Activated T-helper 1 cell treated with anti-CD3 and anti-CD28 coated beads, Interleukin-12 subunit alpha, Interleukin-12 subunit beta, Interleukin-2, Interleukin-4 antibody, amounts not matched to agents 30 ng/mL and 10 ng/mL and 1 ng/mL, durations not matched to agents 14 hours and 24 hours and 36 hours (primary cell): ENCODE measurements at regions of chr2 and their contacts with region 1.

Region 1: GRCh38 chr2:241315093-241315878 is at the start of gene HDLBP:
- DNase-seq: peak; percentile 100
- H3K4me3 Mint-ChIP-seq: peak within 1 kb of the TSS; percentile 100
- H3K27ac Mint-ChIP-seq: peak within 1 kb of the TSS; percentile 100
- H3K4me1 Mint-ChIP-seq: peaks cover 74% of the 10 kb centered on the region
- H3K27me3 Mint-ChIP-seq: peaks cover 2% of the 10 kb centered on the region
- total RNA-seq, gene HDLBP: 270 and 273 TPM in 2 replicates

Region 2: GRCh38 chr2:240832205-240832727 is 483.0 kb before region 1 on chr2:
- intact Hi-C with region 1: loop called (anchors 5 kb)
- DNase-seq: peak; percentile 97
- H3K4me3 Mint-ChIP-seq: no peak overlapping the region
- H3K27ac Mint-ChIP-seq: no peak overlapping the region
- H3K4me1 Mint-ChIP-seq: no peaks in the 10 kb centered on the region
- H3K27me3 Mint-ChIP-seq: peaks cover 27% of the 10 kb centered on the region

Region 3: GRCh38 chr2:241135737-241136136 is 179.5 kb before region 1 on chr2:
- intact Hi-C with region 1: no loop called
- DNase-seq: no peak
- H3K4me3 Mint-ChIP-seq: no peak overlapping the region
- H3K27ac Mint-ChIP-seq: no peak overlapping the region
- H3K4me1 Mint-ChIP-seq: peaks cover 9% of the 10 kb centered on the region
- H3K27me3 Mint-ChIP-seq: no peaks in the 10 kb centered on the region

Region 4: DNA sequence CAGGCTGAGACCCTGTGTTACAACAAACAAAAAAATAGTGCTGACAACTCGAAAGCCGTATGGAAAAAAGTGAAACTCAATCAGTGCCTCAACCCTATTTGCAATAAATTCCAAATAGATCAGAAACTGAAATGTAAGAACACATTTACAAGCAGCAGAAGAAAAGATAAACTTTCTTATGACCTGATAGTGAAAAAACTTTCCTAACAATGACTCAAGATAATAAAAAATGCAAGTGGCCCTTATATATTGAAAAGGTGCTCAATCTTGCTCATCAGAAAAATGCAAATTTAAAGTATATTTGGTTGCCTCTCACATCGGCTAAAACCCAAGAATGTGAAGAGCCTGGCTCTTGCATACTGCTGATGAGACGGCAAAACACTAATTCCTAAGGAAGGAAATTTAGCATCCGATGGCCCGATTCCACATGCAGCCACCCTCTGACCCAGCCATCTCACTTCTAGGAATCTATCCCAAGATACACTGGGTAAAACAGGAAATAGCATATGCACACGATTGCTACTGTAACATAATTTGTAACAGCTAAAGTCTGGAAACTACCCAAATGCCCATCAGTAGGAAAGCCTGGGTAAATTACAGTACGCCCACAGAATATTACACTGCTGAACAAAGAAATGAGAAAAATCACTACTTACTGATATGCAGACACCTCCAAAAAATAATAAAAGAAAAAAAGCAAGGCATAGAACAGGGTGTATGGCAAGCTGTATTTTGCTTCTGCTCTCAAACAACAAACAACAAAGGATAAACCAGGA is 56.6 kb before region 1 on chr2:
- intact Hi-C with region 1: no loop called
- DNase-seq: no peak
- H3K4me3 Mint-ChIP-seq: no peak overlapping the region
- H3K27ac Mint-ChIP-seq: no peak overlapping the region
- H3K4me1 Mint-ChIP-seq: no peaks in the 10 kb centered on the region
- H3K27me3 Mint-ChIP-seq: no peaks in the 10 kb centered on the region

Region 5: DNA sequence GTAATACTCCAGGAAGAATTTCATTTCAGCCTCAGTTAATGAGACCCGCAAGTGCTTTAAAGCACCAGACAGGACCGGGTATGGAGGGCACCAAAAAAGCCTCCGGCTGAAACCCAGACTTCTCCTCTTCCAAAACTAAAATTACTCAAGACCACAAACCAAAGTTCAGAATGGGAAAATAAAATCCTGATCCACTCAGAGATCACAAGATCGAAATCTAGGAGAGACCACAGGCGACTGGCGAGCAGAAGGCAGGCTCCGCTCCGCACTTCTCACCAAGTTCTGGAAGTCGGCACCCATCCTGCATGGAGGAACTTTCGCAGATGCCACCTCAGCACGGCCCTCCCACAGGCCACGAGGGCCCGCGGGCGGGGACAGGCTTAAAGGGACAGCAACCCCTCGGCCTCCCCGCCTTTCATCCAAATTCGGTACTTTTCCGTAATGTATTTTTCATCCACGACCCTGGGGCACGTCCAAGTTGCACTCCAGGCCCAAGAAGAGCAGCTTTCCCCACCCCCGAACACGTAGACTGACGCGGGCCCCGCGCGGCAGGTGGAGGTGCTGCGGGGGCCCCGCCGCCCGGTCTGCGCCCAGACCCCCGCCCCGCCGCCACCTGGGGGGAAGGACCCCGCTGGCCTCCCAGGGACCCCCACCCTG is 43.5 kb before region 1 on chr2:
- intact Hi-C with region 1: loop called (anchors 1 kb)
- DNase-seq: peak; percentile 47
- H3K4me3 Mint-ChIP-seq: peak overlapping the region; percentile 92
- H3K27ac Mint-ChIP-seq: peak overlapping the region; percentile 86
- H3K4me1 Mint-ChIP-seq: peaks cover 29% of the 10 kb centered on the region
- H3K27me3 Mint-ChIP-seq: no peaks in the 10 kb centered on the region

Region 6: DNA sequence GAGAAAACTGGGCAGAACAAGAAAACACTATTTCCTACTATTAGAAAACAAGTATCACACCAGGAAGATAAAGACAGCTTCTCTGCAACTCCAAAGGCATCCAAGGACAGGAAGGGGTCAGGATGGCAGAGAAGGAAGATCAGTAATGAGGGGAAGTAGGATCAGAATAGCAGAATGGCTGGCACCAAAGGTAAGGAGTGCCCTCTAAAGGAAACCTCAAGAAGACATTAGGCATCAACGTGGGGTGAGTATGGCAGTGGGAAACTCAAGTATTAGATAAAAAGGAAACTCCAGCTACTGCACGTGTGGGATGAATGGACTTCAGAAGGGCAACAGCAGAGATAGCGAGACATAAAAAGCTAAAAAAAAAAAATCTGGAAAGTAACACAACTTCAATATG is 25.7 kb before region 1 on chr2:
- intact Hi-C with region 1: no loop called
- DNase-seq: no peak
- H3K4me3 Mint-ChIP-seq: no peak overlapping the region
- H3K27ac Mint-ChIP-seq: no peak overlapping the region
- H3K4me1 Mint-ChIP-seq: peaks cover 47% of the 10 kb centered on the region
- H3K27me3 Mint-ChIP-seq: no peaks in the 10 kb centered on the region

Region 7: DNA sequence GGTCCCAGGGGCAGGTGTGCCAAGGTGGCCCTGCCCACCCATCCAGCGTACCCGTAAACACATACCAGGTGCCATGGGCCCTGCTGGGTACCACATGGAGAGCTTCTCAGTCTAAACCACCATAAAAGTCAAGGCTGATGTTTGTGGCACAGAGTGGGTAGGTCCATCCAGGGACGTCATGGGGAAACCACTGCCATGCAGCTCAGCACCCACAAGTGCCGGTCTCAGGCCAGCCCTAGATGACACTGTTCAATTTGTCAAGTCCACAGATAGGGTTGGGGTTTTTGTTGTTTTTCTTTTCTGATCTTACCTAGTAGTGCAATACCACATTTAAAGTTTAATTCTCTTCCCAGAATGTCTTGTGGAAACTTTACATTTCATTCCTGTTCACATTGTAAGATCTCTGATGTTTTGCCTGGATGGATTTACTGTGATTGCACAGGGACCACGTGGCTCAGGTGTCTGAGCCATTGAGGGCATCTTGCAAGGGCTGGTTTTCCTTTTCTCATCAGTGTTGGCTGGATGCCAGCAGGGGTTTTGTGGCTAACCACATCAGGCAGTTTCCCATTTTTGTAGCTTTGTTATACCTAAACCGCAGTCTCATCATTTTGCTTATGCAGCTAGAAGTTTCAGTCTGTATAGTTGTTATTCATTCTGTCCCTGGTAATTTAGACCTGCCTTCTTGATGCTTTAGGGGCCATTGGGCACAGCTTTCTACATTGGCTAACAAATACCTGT is 128.4 kb after region 1 on chr2:
- intact Hi-C with region 1: loop called (anchors 5 kb)
- DNase-seq: peak; percentile 83
- H3K4me3 Mint-ChIP-seq: peak overlapping the region; percentile 55
- H3K27ac Mint-ChIP-seq: peak overlapping the region; percentile 93
- H3K4me1 Mint-ChIP-seq: peaks cover 32% of the 10 kb centered on the region
- H3K27me3 Mint-ChIP-seq: peaks cover 30% of the 10 kb centered on the region

Region 8: DNA sequence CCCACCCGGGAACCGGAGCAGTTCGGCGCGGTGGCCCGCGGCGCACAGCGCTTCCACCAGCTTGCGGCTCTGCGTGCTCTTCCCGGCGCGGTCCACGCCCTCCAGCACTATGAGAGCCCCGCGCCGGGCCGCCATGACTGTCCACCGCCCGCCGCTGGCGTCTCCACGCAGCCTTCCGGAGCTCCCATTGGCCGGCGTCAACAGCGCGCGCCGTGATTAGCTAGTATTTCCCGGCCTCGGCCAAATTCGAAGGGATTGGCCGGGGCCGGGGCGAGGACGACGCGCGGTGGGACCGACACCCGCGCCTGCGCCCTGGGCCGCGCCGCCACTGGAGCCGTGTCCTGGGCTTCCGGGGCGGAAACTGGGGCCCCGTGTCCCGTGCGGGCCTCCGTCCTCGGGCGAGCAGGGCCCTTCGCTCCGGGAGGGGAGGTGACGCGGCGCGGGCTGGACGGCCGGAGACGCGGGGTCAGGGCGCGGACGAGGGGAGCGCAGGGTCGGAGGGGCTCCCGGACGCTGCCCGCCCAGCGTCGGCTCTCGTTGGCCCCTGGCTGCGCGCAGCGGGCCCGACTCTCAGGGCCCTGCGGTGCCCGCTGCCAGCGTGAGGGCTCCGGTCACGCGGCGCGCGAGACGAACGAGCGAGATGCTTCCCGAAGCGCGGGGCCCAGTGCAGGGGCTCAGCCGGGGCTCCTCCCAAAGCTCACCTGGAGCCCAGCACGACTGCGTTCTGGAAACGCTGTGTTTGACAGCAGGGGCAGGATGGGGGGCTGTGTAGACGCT is 371.6 kb after region 1 on chr2 and contains the start of gene DTYMK:
- intact Hi-C with region 1: loop called (anchors 1 kb)
- DNase-seq: peak; percentile 97
- H3K4me3 Mint-ChIP-seq: peak within 1 kb of the TSS; percentile 96
- H3K27ac Mint-ChIP-seq: peak within 1 kb of the TSS; percentile 98
- H3K4me1 Mint-ChIP-seq: peaks cover 28% of the 10 kb centered on the region
- H3K27me3 Mint-ChIP-seq: no peaks in the 10 kb centered on the region
- total RNA-seq, gene DTYMK: 102 and 106 TPM in 2 replicates

Region 9: GRCh38 chr2:241844066-241844728 is 528.9 kb after region 1 on chr2:
- intact Hi-C with region 1: loop called (anchors 1 kb)
- DNase-seq: peak; percentile 79
- H3K4me3 Mint-ChIP-seq: peak overlapping the region; percentile 43
- H3K27ac Mint-ChIP-seq: peak overlapping the region; percentile 95
- H3K4me1 Mint-ChIP-seq: peaks cover 27% of the 10 kb centered on the region
- H3K27me3 Mint-ChIP-seq: peaks cover 8% of the 10 kb centered on the region